Activated CD8-positive, alpha-beta T cell treated with anti-CD3 and anti-CD28 coated beads, Interleukin-2, amount 10 ng/mL, durations not matched to agents 7 days and 5 days (primary cell): ENCODE measurements at regions of chr6 and their contacts with region 1.

Region 1: GRCh38 chr6:112180095-112180820 is 74.1 kb downstream of the LAMA4 start:
- DNase-seq: peak; percentile 75
- ATAC-seq: peak; percentile 79
- H3K4me3 Mint-ChIP-seq: no peak overlapping the region
- H3K27ac Mint-ChIP-seq: no peak overlapping the region
- H3K4me1 Mint-ChIP-seq: no peaks in the 10 kb centered on the region
- H3K27me3 Mint-ChIP-seq: peaks cover 45% of the 10 kb centered on the region

Region 2: GRCh38 chr6:112196306-112196705 is 16.0 kb after region 1 on chr6:
- CTCF ChIA-PET with region 1: interaction called, 15 read pairs
- POLR2A ChIA-PET with region 1: no interaction called
- DNase-seq: no peak
- ATAC-seq: no peak
- H3K4me3 Mint-ChIP-seq: no peak overlapping the region
- H3K27ac Mint-ChIP-seq: no peak overlapping the region
- H3K4me1 Mint-ChIP-seq: no peaks in the 10 kb centered on the region
- H3K27me3 Mint-ChIP-seq: peaks cover 46% of the 10 kb centered on the region

Region 3: DNA sequence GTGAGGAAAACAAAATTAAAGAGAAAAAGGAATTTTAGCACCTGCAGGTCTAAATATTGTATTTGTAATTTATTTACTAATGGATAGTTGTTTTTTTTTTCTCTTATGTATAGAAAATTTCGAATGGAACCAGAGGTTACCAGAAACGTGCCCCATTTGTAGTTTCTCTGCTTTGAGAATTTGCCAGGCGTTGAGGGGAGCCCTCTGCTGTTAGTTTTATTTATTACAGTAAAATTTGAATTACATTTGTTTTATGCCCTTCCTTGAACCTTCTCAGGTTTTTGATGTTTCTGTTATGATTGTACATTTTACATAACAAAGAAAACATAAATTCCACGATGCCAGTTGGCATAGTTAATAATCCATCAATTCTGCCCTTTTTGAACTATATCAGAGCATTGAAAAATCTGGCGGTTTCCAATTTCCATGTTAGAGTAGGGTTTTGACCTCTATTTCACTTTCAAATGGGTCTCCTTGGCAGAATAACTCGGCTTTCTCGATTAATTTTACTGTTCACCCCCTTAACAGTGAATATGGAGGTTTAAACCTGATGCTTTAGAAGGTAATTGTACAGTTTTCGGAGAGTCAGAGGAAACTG is 131.8 kb after region 1 on chr6:
- CTCF ChIA-PET with region 1: interaction called, 60 read pairs
- POLR2A ChIA-PET with region 1: no interaction called
- DNase-seq: peak; percentile 30
- ATAC-seq: no peak
- H3K4me3 Mint-ChIP-seq: no peak overlapping the region
- H3K27ac Mint-ChIP-seq: no peak overlapping the region
- H3K4me1 Mint-ChIP-seq: no peaks in the 10 kb centered on the region
- H3K27me3 Mint-ChIP-seq: peaks cover 46% of the 10 kb centered on the region

Region 4: DNA sequence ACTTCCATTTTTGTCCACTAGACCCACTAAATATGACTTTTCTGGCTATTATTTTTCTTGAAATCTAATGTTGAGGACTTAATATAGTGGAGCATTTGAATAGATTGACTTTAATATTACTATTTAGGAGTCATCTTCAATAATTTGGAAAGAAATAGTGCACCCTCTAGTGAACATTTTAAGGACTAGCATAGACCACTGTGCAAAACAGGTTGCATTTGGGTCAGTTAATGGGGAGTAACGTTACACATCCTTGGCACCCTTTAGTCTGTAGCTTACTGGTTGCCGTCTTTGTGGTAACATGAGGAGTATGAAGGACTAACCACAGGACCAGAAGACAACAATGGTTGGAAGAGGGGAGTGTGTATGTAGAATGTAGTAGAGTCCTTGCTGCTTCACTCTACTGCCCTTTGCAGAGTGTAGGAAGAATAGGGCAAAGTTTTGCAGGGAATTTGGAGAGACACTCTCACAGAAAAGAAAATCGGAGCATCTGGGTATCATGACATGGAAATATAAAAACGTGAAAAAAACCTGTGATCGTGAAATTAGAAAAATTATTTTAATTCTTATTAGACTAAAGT is 192.1 kb after region 1 on chr6:
- CTCF ChIA-PET with region 1: interaction called, 10 read pairs
- POLR2A ChIA-PET with region 1: no interaction called
- DNase-seq: no peak
- ATAC-seq: no peak
- H3K4me3 Mint-ChIP-seq: no peak overlapping the region
- H3K27ac Mint-ChIP-seq: no peak overlapping the region
- H3K4me1 Mint-ChIP-seq: no peaks in the 10 kb centered on the region
- H3K27me3 Mint-ChIP-seq: peaks cover 17% of the 10 kb centered on the region